T-cell (primary cell): ENCODE measurements at regions of chr3 and their contacts with region 1.

Region 1: GRCh38 chr3:153257673-153258351 is 95.8 kb downstream of the RAP2B start:
- DNase-seq: no peak
- ATAC-seq: no peak
- H3K4me3 ChIP-seq: no peak overlapping the region
- H3K4me3 Mint-ChIP-seq: no peak overlapping the region
- H3K27ac ChIP-seq: no peak overlapping the region
- H3K27ac Mint-ChIP-seq: peak overlapping the region in 1 of 2 donors; percentile 19
- H3K4me1 ChIP-seq: no peaks in the 10 kb centered on the region
- H3K4me1 Mint-ChIP-seq: peaks cover 24 to 29% (median 29%) of the 10 kb centered on the region in 3 donors
- H3K27me3 ChIP-seq: no peaks in the 10 kb centered on the region
- H3K27me3 Mint-ChIP-seq: no peaks in the 10 kb centered on the region

Region 2: DNA sequence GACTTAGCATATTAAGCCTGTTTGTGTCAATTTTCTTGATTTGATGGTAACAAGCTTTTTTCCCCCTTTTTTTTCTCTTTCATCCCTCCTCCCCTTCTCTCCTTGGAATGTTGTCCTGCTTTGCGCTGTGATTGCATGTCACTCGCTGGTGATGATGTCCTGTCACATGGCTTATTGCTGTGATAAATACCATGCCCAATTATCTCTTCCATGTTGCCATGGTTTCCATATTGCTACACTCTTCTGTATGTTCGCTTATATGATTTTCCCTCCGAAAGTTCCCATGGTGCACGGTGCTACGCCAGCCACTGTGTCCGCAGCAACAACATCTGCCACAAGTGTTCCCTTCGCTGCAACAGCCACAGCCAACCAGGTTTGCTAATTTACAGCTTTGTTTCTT is 801.8 kb before region 1 on chr3:
- CTCF ChIA-PET with region 1: no interaction called
- POLR2A ChIA-PET with region 1: interaction called in 1 of 2 experiments, 10 read pairs
- DNase-seq: no peak
- ATAC-seq: no peak
- H3K4me3 ChIP-seq: no peak overlapping the region
- H3K4me3 Mint-ChIP-seq: no peak overlapping the region
- H3K27ac ChIP-seq: peak overlapping the region; percentile 11
- H3K27ac Mint-ChIP-seq: peak overlapping the region; percentile 74 to 85
- H3K4me1 ChIP-seq: peaks cover 2 to 8% of the 10 kb centered on the region in 2 experiments
- H3K4me1 Mint-ChIP-seq: peaks cover 53 to 63% (median 61%) of the 10 kb centered on the region in 3 donors
- H3K27me3 ChIP-seq: no peaks in the 10 kb centered on the region
- H3K27me3 Mint-ChIP-seq: no peaks in the 10 kb centered on the region

Region 3: GRCh38 chr3:153246806-153247205 is 11.0 kb before region 1 on chr3:
- CTCF ChIA-PET with region 1: interaction called in 1 of 2 experiments, 15 read pairs
- POLR2A ChIA-PET with region 1: interaction called in 1 of 2 experiments, 3 read pairs
- DNase-seq: no peak
- ATAC-seq: no peak
- H3K4me3 ChIP-seq: no peak overlapping the region
- H3K4me3 Mint-ChIP-seq: no peak overlapping the region
- H3K27ac ChIP-seq: no peak overlapping the region
- H3K27ac Mint-ChIP-seq: peak overlapping the region in 1 of 2 donors; percentile 62
- H3K4me1 ChIP-seq: peaks cover 7 to 8% of the 10 kb centered on the region in 2 experiments
- H3K4me1 Mint-ChIP-seq: peaks cover 38 to 49% (median 40%) of the 10 kb centered on the region in 3 donors
- H3K27me3 ChIP-seq: no peaks in the 10 kb centered on the region
- H3K27me3 Mint-ChIP-seq: no peaks in the 10 kb centered on the region

Region 4: DNA sequence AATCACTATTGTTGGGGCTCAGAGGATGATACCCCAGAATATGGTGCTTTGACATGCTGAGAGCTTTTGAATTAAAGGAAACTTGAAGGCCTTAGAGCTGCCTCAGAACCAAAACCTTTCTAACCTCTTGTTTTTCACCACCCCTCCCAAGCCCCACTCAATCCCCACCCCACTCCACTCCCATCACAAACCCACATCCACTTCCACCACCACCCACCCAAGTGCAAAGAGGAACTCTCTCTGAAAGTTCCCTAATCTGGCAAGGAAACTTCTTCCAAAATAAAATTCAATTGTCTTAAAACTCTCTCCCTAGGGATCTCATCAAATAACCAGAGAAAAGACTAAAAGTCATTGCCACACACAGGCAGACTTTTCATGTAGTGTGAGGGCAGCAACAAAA is 562.2 kb after region 1 on chr3:
- CTCF ChIA-PET with region 1: interaction called in 1 of 2 experiments, 11 read pairs
- POLR2A ChIA-PET with region 1: no interaction called
- DNase-seq: no peak
- ATAC-seq: no peak
- H3K4me3 ChIP-seq: no peak overlapping the region
- H3K4me3 Mint-ChIP-seq: no peak overlapping the region
- H3K27ac ChIP-seq: no peak overlapping the region
- H3K27ac Mint-ChIP-seq: no peak overlapping the region
- H3K4me1 ChIP-seq: no peaks in the 10 kb centered on the region
- H3K4me1 Mint-ChIP-seq: peaks cover 0 to 7% (median 0%) of the 10 kb centered on the region in 3 donors
- H3K27me3 ChIP-seq: no peaks in the 10 kb centered on the region
- H3K27me3 Mint-ChIP-seq: peaks cover 0 to 5% of the 10 kb centered on the region in 2 donors